K562 (cell line): ENCODE measurements at regions of chr10 and their contacts with region 1.

Region 1: DNA sequence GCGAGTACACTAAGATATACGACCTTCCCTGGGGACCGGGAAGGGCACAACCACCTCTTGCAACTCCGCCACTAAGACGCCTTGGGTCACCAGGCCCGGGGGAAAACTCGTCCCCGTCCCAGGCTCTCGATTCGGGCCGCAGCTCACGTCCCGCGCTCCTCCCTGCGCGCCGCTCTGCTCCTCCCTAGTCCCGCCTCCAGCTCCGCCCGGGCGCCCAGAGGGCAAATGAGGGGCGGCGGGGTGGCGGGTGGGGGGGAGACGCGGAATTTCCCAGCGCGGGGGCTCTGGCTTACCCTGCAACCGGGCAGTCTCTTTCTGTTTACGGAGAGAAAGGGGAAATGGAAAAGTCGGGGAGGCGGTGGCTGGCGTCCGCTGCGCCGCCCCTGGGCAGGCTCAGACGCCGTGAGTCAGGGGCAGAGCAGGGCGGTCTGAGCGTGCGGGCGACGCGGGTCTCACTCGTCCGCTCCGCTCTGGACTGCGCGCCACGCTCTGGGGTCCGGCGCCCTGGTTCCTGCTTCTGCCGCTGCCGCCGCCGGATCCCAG is at the start of gene MAP3K8:
- DNase-seq: peak; percentile 68 to 87 (median 75)
- ATAC-seq: peak; percentile 76
- H3K4me3 ChIP-seq: peak within 1 kb of the TSS; percentile 75
- H3K27ac ChIP-seq: peak within 1 kb of the TSS; percentile 95
- H3K4me1 ChIP-seq: peaks cover 37 to 41% of the 10 kb centered on the region in 2 experiments
- H3K27me3 ChIP-seq: no peaks in the 10 kb centered on the region
- CTCF ChIP-seq: no peak
- EP300 ChIP-seq: no peak
- POLR2A ChIP-seq: no peak; the same call in none of the 2 replicates
- RAD21 ChIP-seq: no peak
- polyA plus RNA-seq, gene MAP3K8: 14.0 to 16.4 TPM

Region 2: DNA sequence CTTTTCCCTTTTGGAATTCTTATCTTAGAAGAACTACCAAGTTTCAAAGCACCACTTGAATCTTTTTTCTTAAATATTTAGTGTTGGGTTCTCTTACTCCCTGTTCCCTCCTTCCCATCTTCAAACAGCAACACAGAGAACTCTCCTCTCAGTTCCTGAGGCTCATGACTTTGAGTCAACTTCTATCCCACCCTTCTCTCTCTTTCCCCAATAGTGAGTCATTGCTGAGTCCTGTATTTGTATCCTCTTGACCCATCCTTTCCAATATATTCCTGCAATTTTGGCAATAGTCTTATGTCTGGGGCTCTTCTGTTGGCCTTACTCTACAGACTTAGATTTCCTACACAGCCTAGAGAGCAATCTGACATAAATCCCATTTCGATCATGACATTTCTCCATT is 353.6 kb before region 1 on chr10:
- CTCF ChIA-PET with region 1: no interaction called
- POLR2A ChIA-PET with region 1: no interaction called
- in situ Hi-C with region 1: no loop called
- intact Hi-C with region 1: no loop called
- DNase-seq: no peak
- ATAC-seq: no peak
- H3K4me3 ChIP-seq: no peak overlapping the region
- H3K27ac ChIP-seq: no peak overlapping the region
- H3K4me1 ChIP-seq: no peaks in the 10 kb centered on the region
- H3K27me3 ChIP-seq: peaks cover 6% of the 10 kb centered on the region in 2 experiments; a peak in 2 of 5 replicates
- CTCF ChIP-seq: no peak
- EP300 ChIP-seq: no peak
- POLR2A ChIP-seq: no peak
- RAD21 ChIP-seq: no peak

Region 3: GRCh38 chr10:30313579-30314350 is 120.0 kb before region 1 on chr10:
- CTCF ChIA-PET with region 1: no interaction called
- POLR2A ChIA-PET with region 1: no interaction called
- in situ Hi-C with region 1: no loop called
- intact Hi-C with region 1: no loop called
- DNase-seq: no peak
- ATAC-seq: no peak
- H3K4me3 ChIP-seq: no peak overlapping the region
- H3K27ac ChIP-seq: no peak overlapping the region
- H3K4me1 ChIP-seq: no peaks in the 10 kb centered on the region
- H3K27me3 ChIP-seq: no peaks in the 10 kb centered on the region
- CTCF ChIP-seq: no peak
- EP300 ChIP-seq: no peak
- POLR2A ChIP-seq: no peak
- RAD21 ChIP-seq: no peak

Region 4: GRCh38 chr10:30413996-30414576 is 19.7 kb before region 1 on chr10:
- CTCF ChIA-PET with region 1: interaction called, 4 read pairs
- POLR2A ChIA-PET with region 1: interaction called, 4 read pairs
- in situ Hi-C with region 1: no loop called
- intact Hi-C with region 1: loop called (anchors 1 kb)
- DNase-seq: peak; percentile 62 to 73 (median 68)
- ATAC-seq: peak; percentile 74
- H3K4me3 ChIP-seq: no peak overlapping the region
- H3K27ac ChIP-seq: no peak overlapping the region
- H3K4me1 ChIP-seq: peaks cover 5 to 14% of the 10 kb centered on the region in 2 experiments; a peak in 4 of 5 replicates
- H3K27me3 ChIP-seq: no peaks in the 10 kb centered on the region
- CTCF ChIP-seq: peak; percentile 77 to 86 (median 82)
- EP300 ChIP-seq: no peak
- POLR2A ChIP-seq: no peak
- RAD21 ChIP-seq: peak; percentile 92 to 95

Region 5: DNA sequence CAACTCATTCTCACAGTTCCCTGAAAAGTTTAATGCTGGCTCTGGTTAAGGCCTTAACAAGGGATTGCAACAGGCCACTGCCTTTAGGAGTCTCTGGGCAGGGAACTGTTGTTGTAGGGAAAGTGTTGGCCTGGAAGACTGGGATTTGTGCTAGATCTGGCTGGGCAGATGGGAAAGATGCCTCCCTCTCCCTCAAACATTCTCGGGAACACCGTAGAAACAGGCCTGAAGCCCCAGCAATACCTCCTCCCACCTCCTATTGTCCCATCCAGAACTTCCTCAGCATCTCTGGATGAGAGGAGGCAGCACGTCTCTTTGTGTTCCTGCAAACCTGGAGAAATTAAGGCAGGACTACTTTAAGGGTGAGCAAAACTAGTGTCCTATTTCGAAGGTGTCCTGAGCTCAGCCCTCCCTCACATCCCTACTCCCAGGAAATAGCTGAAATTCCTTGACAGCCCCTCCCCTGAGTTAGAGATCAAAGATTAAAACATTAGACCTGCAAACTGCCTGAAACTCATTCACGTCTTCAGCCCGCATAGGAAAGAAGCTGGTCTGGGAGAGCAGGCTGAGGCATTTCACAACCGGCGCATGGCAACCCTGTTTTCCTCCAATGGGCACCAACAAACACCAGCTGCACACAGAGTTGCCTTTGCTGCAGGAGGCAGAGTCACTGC is 10.7 kb before region 1 on chr10:
- CTCF ChIA-PET with region 1: no interaction called
- POLR2A ChIA-PET with region 1: interaction called, 19 read pairs
- in situ Hi-C with region 1: no loop called
- intact Hi-C with region 1: no loop called
- DNase-seq: no peak
- ATAC-seq: no peak; the same call in 2 of the 3 replicates
- H3K4me3 ChIP-seq: no peak overlapping the region
- H3K27ac ChIP-seq: no peak overlapping the region
- H3K4me1 ChIP-seq: peaks cover 14 to 42% of the 10 kb centered on the region in 2 experiments
- H3K27me3 ChIP-seq: no peaks in the 10 kb centered on the region
- CTCF ChIP-seq: no peak
- EP300 ChIP-seq: no peak
- POLR2A ChIP-seq: no peak
- RAD21 ChIP-seq: no peak

Region 6: DNA sequence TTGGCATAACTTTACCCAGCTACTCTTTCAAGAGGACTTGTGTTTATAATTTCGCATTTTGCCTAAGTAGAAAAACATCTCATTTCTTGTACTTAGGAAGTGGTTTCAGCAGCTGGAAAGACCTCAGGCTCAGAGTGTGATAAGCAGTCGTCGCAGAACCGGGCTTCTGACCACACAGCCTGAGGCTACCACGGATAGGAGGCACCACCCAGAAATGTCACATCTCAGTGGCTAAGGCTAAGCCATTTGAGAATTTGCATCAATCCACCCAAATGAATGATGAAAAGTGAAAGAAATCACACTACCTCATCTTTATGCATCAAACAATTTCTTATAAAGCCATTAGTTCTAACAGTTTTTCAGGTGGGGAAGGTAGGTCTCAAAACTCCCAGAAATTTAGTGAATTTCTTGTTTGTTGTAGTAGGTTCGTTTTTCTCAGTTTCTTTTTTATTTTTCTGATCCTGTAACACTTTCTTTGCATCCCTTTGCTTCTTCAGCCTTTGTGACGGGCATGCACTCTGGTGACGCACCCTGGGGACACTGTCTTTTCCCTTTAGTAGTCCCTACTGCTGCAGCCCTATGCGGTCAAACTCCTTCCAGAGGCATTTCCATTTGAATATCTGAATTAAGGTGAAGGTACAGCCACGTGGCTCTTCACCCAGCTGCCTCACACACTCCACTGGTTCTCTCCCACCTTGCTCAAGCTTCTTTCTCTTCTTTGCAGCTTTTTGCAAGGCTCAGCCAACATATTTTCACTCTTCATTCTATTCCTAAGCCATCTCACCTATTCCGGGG is 68.7 kb after region 1 on chr10:
- CTCF ChIA-PET with region 1: no interaction called
- POLR2A ChIA-PET with region 1: interaction called, 5 read pairs
- in situ Hi-C with region 1: no loop called
- intact Hi-C with region 1: loop called (anchors 5 kb)
- DNase-seq: peak; percentile 59 to 87 (median 72)
- ATAC-seq: peak; percentile 93
- H3K4me3 ChIP-seq: no peak overlapping the region
- H3K27ac ChIP-seq: peak overlapping the region; percentile 1
- H3K4me1 ChIP-seq: peaks cover 8 to 39% of the 10 kb centered on the region in 2 experiments; a peak in 4 of 5 replicates
- H3K27me3 ChIP-seq: no peaks in the 10 kb centered on the region
- CTCF ChIP-seq: no peak
- EP300 ChIP-seq: 0 out of 2 replicates have a peak, but pooled peaks have one; percentile 22
- POLR2A ChIP-seq: no peak
- RAD21 ChIP-seq: no peak

Region 7: GRCh38 chr10:30553625-30554439 is 120.0 kb after region 1 on chr10:
- CTCF ChIA-PET with region 1: no interaction called
- POLR2A ChIA-PET with region 1: interaction called, 38 read pairs
- in situ Hi-C with region 1: no loop called
- intact Hi-C with region 1: loop called (anchors 5 kb)
- DNase-seq: peak; percentile 69 to 82 (median 70)
- ATAC-seq: peak; percentile 68
- H3K4me3 ChIP-seq: peak overlapping the region; percentile 10; the same call in 1 of the 2 replicates
- H3K27ac ChIP-seq: peak overlapping the region; percentile 97
- H3K4me1 ChIP-seq: peaks cover 20 to 37% of the 10 kb centered on the region in 2 experiments
- H3K27me3 ChIP-seq: no peaks in the 10 kb centered on the region
- CTCF ChIP-seq: no peak
- EP300 ChIP-seq: 0 out of 2 replicates have a peak, but pooled peaks have one; percentile 35
- POLR2A ChIP-seq: peak; percentile 36
- RAD21 ChIP-seq: no peak